ENCODE measurements at regions of chrX and their contacts with region 1.

Region 1: GRCh38 chrX:35362866-35363265 is 420.3 kb downstream of the FAM47B start:
- DNase-seq: no peak
- H3K4me3 ChIP-seq: no peak overlapping the region
- H3K27ac ChIP-seq: no peak overlapping the region
- H3K4me1 ChIP-seq: no peaks in the 10 kb centered on the region
- H3K27me3 ChIP-seq: no peaks in the 10 kb centered on the region
- CTCF ChIP-seq: no peak
- EP300 ChIP-seq: no peak
- RAD21 ChIP-seq: no peak

Region 2: GRCh38 chrX:35339796-35340195 is 23.1 kb before region 1 on chrX:
- CTCF ChIA-PET with region 1: no interaction called
- POLR2A ChIA-PET with region 1: no interaction called
- DNase-seq: no peak
- H3K4me3 ChIP-seq: no peak overlapping the region
- H3K27ac ChIP-seq: no peak overlapping the region
- H3K4me1 ChIP-seq: no peaks in the 10 kb centered on the region
- H3K27me3 ChIP-seq: no peaks in the 10 kb centered on the region
- CTCF ChIP-seq: no peak
- EP300 ChIP-seq: no peak
- RAD21 ChIP-seq: no peak

Region 3: GRCh38 chrX:35380808-35381700 is 18.2 kb after region 1 on chrX:
- CTCF ChIA-PET with region 1: interaction called, 10 read pairs
- POLR2A ChIA-PET with region 1: no interaction called
- DNase-seq: peak; percentile 16
- H3K4me3 ChIP-seq: no peak overlapping the region
- H3K27ac ChIP-seq: no peak overlapping the region
- H3K4me1 ChIP-seq: no peaks in the 10 kb centered on the region
- H3K27me3 ChIP-seq: no peaks in the 10 kb centered on the region
- CTCF ChIP-seq: peak; percentile 74
- EP300 ChIP-seq: no peak
- RAD21 ChIP-seq: peak; percentile 58

Measured in SK-N-SH (cell line).